ENCODE measurements at regions of chr17 and their contacts with region 1.

Region 1: DNA sequence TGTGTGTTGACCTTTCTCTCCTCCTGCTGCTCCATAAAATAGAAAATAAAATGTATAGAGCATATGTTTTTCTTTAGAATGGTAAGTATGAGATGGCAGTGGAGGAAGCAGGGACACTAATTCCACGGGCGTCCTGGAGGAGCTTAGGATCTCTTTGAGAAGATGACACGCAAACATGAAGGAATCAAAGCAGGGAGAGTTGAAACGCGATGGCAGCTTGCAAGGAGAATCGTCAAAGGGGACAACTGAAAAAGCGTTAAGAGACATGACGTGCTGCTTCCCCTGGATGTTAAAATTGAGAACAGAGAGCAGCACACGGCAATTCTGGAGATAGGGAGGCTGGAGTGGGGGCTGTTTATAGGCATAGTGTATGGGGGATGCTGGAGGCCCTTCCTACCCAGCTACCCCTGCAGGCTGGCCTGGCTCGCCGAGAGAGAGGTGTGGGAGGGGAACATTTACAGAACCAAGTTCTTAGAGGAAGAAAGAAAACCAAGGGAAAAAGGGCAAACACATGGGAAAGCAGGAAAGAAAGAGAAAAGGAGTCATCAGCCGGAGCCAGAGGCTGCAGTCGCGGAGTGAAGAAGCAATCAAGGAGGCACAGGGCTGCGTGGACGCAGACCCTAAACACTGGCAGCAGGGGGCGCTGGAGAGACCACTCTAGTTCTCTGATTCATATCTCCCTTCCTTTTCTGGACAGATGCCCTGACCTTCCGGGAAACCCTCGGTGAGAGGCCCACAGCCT is 55.8 kb downstream of the MYH13 start:
- DNase-seq: peak; percentile 60 to 67
- ATAC-seq: peak in 3 of 4 donors; percentile 27 to 59 (median 53)
- H3K4me3 ChIP-seq: no peak overlapping the region
- H3K27ac ChIP-seq: no peak overlapping the region
- H3K4me1 ChIP-seq: no peaks in the 10 kb centered on the region
- H3K27me3 ChIP-seq: no peaks in the 10 kb centered on the region
- CTCF ChIP-seq: peak; percentile 36

Region 2: DNA sequence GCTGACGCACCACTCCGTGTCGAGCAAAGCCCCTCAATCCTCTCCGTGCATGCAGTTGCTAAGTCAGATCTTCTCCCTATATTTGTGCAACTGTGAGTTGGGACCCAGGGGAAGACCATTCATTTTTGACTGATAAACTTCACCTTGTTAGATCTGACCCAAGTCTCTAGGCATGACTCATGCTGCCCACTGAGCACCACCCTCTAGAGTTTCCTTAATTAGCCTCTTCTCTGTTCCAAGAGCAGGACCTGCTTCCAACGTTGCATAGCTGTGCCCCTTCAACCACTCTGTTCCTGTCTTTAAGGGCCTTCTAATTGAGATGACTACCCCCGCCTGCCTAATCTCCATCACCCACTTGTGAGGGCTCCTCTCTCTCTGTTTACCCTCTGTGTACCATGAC is 53.2 kb after region 1 on chr17:
- intact Hi-C with region 1: loop called in 1 of 2 experiments (anchors 10 kb)
- DNase-seq: no peak
- ATAC-seq: no peak
- H3K4me3 ChIP-seq: no peak overlapping the region
- H3K27ac ChIP-seq: no peak overlapping the region
- H3K4me1 ChIP-seq: no peaks in the 10 kb centered on the region
- H3K27me3 ChIP-seq: no peaks in the 10 kb centered on the region
- CTCF ChIP-seq: no peak

Measured in psoas muscle (tissue), 8 donors.